PC-3 (cell line): ENCODE measurements at regions of chr11 and their contacts with region 1.

Region 1: DNA sequence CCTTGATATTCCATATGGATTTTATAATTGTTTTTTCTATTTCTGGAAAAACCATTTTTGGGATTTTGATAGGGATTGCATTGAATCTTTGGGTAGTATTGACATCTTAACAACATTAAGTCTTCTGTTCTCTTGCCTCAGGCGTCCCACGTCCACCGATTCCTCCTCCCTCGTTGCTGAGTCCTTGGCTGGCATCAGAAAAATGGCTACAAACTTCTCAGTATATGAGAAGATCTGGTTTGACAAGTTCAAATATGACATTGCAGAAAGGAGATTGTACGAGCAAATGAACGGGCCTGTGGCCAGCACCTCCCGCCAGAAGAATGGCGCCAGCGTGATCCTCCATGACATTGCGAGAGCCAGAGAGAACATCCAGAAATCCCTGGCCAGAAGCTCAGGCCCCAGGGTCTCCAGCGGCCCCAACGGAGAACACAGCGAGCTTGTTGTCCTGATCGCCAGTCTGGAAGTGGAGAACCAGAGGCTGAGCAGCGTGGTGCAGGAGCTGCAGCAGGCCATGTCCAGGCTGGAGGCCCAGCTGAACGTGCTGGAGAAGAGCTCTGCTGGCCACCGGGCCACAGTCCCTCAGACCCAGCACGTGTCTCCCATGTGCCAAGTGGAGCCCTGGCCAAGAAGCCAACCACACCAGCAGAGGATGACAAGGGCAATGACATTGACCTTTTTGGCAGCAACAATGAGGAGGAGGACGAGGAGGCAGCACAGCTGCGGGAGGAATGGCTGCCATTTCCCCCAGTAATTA is 20.7 kb upstream of the SCGB1D1 start:
- DNase-seq: no peak
- ATAC-seq: no peak
- H3K4me3 ChIP-seq: no peak overlapping the region
- H3K27ac ChIP-seq: no peak overlapping the region
- H3K4me1 ChIP-seq: 0 out of 2 replicates have a peak, but pooled peaks cover 4% of the 10 kb centered on the region
- H3K27me3 ChIP-seq: peaks cover 67% of the 10 kb centered on the region
- CTCF ChIP-seq: no peak

Region 2: GRCh38 chr11:61917341-61918109 is 251.7 kb before region 1 on chr11 and contains the start of gene RAB3IL1:
- CTCF ChIA-PET with region 1: no interaction called
- POLR2A ChIA-PET with region 1: no interaction called
- intact Hi-C with region 1: no loop called
- DNase-seq: peak; percentile 50
- ATAC-seq: peak; percentile 68
- H3K4me3 ChIP-seq: peak within 1 kb of the TSS; percentile 74
- H3K27ac ChIP-seq: no peak within 1 kb of the TSS
- H3K4me1 ChIP-seq: no peaks in the 10 kb centered on the region
- H3K27me3 ChIP-seq: peaks cover 9% of the 10 kb centered on the region; the same call in 1 of the 2 replicates
- CTCF ChIP-seq: no peak
- total RNA-seq, gene RAB3IL1: 6.6 and 7.9 TPM in 2 replicates

Region 3: DNA sequence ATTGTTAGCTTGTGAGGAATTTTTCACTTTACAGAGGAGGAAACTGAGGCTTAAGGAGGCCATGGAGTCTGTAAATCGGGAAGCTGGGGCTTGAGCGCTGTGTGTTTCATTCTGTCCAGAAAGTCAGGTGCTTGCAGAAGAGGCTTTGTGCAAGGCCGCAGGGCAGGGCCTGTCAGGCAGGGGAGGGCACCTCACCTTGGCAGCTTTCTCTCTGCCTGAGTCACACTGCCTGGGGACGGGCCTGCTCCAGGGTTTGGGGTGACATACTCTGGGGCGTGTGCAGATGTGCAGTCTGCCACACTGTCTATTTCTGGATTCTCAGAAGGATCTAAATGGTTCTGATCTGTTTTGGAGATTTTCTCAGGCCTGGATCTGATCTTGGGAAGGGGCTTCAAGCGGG is 37.1 kb before region 1 on chr11:
- CTCF ChIA-PET with region 1: interaction called, 12 read pairs
- POLR2A ChIA-PET with region 1: no interaction called
- intact Hi-C with region 1: no loop called
- DNase-seq: peak; percentile 62
- ATAC-seq: peak; percentile 100
- H3K4me3 ChIP-seq: no peak overlapping the region
- H3K27ac ChIP-seq: no peak overlapping the region
- H3K4me1 ChIP-seq: peaks cover 7% of the 10 kb centered on the region; the same call in 1 of the 2 replicates
- H3K27me3 ChIP-seq: no peaks in the 10 kb centered on the region
- CTCF ChIP-seq: no peak

Region 4: DNA sequence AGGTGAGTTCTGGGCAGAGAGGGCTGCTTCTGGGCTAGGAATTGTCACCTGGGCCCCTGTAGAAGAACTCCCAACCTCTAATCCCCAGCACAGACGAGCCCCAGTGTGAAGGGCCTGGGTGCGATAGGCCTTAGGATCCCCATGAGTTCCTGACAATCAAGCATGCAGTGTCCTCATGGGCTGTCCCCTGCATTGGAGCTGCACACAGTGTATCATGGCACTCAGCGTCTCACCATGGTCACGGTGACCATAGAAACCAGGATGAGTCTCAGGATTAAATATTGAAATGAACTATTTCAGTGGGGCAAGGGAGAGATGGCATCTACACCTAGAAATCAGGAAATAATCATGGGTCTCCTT is 39.5 kb after region 1 on chr11:
- CTCF ChIA-PET with region 1: no interaction called
- POLR2A ChIA-PET with region 1: no interaction called
- intact Hi-C with region 1: loop called (anchors 1 kb)
- DNase-seq: no peak
- ATAC-seq: no peak
- H3K4me3 ChIP-seq: no peak overlapping the region
- H3K27ac ChIP-seq: no peak overlapping the region
- H3K4me1 ChIP-seq: peaks cover 6% of the 10 kb centered on the region; the same call in 1 of the 2 replicates
- H3K27me3 ChIP-seq: peaks cover 30% of the 10 kb centered on the region
- CTCF ChIP-seq: no peak

Region 5: DNA sequence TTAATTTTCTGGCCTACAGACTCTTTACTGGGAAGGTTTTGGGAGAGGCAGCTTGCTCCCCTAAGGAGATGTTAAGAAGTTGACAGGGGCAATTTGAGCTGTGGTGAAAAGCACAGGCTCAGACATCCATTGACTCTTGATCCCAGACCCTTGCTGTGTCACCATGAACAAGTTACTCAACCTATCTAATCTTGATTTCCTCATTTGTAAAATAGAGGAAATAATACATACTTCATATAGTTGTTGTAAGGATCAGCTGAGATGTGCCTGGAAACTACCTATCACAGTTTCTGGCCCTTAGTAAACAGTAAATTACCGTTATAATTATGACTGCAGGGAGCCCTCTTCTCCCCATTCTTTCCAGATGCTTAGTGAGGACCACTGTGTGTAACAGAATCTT is 146.2 kb after region 1 on chr11:
- CTCF ChIA-PET with region 1: no interaction called
- POLR2A ChIA-PET with region 1: no interaction called
- intact Hi-C with region 1: loop called (anchors 1 kb)
- DNase-seq: no peak
- ATAC-seq: no peak
- H3K4me3 ChIP-seq: no peak overlapping the region
- H3K27ac ChIP-seq: no peak overlapping the region
- H3K4me1 ChIP-seq: no peaks in the 10 kb centered on the region
- H3K27me3 ChIP-seq: peaks cover 50% of the 10 kb centered on the region
- CTCF ChIP-seq: no peak

Region 6: GRCh38 chr11:62370743-62371440 is 201.6 kb after region 1 on chr11:
- CTCF ChIA-PET with region 1: no interaction called
- POLR2A ChIA-PET with region 1: no interaction called
- intact Hi-C with region 1: loop called (anchors 5 kb)
- DNase-seq: no peak
- ATAC-seq: no peak
- H3K4me3 ChIP-seq: no peak overlapping the region
- H3K27ac ChIP-seq: no peak overlapping the region
- H3K4me1 ChIP-seq: no peaks in the 10 kb centered on the region
- H3K27me3 ChIP-seq: no peaks in the 10 kb centered on the region
- CTCF ChIP-seq: no peak